Heart left ventricle (tissue), 16 donors: ENCODE measurements at regions of chr3 and their contacts with region 1.

Region 1: DNA sequence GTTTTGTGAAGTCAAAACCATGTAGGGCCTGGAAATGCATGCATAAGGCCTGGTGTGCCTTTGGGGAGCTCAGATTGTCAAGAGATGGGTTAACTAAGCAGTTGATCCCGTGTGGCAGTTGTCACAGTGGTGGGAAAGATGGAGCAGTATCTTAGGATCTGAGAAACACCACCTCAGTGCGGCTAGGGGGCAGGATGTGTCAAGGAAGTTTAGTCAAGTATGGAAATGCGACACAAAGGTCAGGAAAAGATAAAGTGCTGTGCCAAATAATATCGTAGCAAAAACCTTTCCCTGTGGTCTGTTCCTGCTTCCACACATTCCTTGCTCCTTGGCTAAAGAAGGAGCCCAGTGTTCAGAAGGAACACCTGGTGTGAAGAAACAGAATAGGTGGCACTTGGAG is 396.4 kb downstream of the EDEM1 start:
- DNase-seq: no peak
- ATAC-seq: no peak
- H3K4me3 ChIP-seq: no peak overlapping the region
- H3K27ac ChIP-seq: no peak overlapping the region
- H3K4me1 ChIP-seq: no peaks in the 10 kb centered on the region
- H3K27me3 ChIP-seq: no peaks in the 10 kb centered on the region
- CTCF ChIP-seq: no peak
- POLR2A ChIP-seq: no peak

Region 2: GRCh38 chr3:5644773-5645675 is 61.1 kb after region 1 on chr3:
- intact Hi-C with region 1: loop called in 1 of 10 experiments (anchors 2 kb)
- DNase-seq: no peak
- ATAC-seq: no peak
- H3K4me3 ChIP-seq: no peak overlapping the region
- H3K27ac ChIP-seq: no peak overlapping the region
- H3K4me1 ChIP-seq: no peaks in the 10 kb centered on the region
- H3K27me3 ChIP-seq: no peaks in the 10 kb centered on the region
- CTCF ChIP-seq: no peak
- POLR2A ChIP-seq: no peak

Region 3: DNA sequence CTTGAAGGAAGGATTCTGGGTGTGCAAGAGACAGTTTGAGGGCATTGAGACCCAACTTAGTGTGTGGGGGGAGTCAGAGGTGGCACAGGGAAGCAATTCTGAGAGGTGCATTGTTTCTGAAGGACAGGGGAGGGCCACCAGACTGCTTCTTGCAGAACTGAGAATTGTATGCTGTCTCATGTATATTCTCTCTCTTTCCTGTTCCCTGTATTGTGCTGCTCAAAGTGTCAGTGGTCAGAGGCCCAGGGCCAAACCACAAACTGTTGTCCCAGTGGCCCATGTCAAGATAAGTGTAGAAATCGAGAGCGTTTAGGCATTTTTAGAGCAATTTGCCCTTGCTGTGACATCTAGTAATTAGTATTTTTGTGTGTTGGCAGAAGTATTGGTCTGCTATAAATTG is 170.7 kb after region 1 on chr3:
- intact Hi-C with region 1: no loop called
- DNase-seq: no peak
- ATAC-seq: no peak
- H3K4me3 ChIP-seq: no peak overlapping the region
- H3K27ac ChIP-seq: no peak overlapping the region
- H3K4me1 ChIP-seq: no peaks in the 10 kb centered on the region
- H3K27me3 ChIP-seq: no peaks in the 10 kb centered on the region
- CTCF ChIP-seq: no peak
- POLR2A ChIP-seq: no peak

Region 4: GRCh38 chr3:6062261-6063187 is 478.6 kb after region 1 on chr3:
- intact Hi-C with region 1: no loop called
- DNase-seq: no peak
- ATAC-seq: no peak
- H3K4me3 ChIP-seq: no peak overlapping the region
- H3K27ac ChIP-seq: no peak overlapping the region
- H3K4me1 ChIP-seq: no peaks in the 10 kb centered on the region
- H3K27me3 ChIP-seq: no peaks in the 10 kb centered on the region
- CTCF ChIP-seq: no peak
- POLR2A ChIP-seq: no peak